Thyroid gland (tissue), 4 donors: ENCODE measurements at regions of chr10 and their contacts with region 1.

Region 1: GRCh38 chr10:63720072-63720537 is 198.9 kb downstream of the REEP3 start:
- DNase-seq: peak; percentile 47 to 54
- H3K4me3 ChIP-seq: no peak overlapping the region
- H3K27ac ChIP-seq: peak overlapping the region in 1 of 3 donors; percentile 21
- H3K4me1 ChIP-seq: peaks cover 8 to 22% of the 10 kb centered on the region in 2 donors
- H3K27me3 ChIP-seq: no peaks in the 10 kb centered on the region
- CTCF ChIP-seq: peak; percentile 92 to 99 (median 94)
- POLR2A ChIP-seq: no peak

Region 2: DNA sequence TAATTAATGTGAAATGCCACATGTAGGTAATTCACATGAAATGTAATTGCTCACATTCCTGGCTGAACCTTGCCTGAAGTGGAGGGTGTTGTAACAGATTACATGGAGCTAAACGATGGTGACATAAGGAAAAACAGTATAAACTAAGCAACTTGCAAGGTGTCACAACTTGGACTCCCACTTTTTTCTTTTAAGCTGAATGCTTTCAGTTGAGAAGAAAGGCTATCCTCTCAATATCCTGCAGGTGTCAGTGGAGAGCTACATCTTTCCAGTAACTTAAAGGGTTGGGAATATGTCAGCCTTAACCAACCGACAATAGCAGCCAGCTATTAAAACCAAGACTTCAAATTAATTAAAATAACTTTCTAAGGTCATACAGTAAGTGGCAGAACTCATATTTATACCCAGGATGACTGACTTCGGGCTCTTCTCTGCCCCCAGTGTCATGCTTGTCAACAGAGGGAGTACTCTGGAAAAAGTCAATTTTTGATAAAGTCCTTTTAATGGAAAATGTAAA is 553.3 kb before region 1 on chr10:
- intact Hi-C with region 1: loop called (anchors 5 kb)
- DNase-seq: no peak
- H3K4me3 ChIP-seq: no peak overlapping the region
- H3K27ac ChIP-seq: peak overlapping the region in 1 of 3 donors; percentile 41
- H3K4me1 ChIP-seq: peaks cover 8 to 13% of the 10 kb centered on the region in 2 donors
- H3K27me3 ChIP-seq: no peaks in the 10 kb centered on the region
- CTCF ChIP-seq: peak; percentile 66 to 94 (median 82)
- POLR2A ChIP-seq: no peak

Region 3: DNA sequence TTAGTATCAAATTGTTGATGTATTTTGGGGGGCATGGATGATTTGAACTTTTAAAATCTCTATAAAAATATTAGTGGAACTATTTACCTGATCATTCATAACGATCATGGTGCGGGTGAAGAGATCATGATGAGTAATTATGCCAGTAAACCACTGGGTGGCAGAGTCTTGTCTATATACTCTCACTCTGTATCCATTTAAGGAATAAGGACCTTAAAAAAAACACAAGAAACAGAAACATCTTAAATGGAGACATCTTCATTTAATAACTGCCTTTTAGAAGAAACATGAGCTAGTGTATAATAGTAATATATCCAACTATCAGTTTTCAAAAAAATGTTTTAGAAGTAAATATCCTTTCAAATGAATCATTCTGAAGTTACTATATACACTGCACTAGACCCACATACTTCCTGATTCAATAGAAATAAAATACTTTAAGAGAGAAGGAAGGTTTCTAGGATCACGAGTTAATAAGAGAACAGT is 502.9 kb before region 1 on chr10:
- intact Hi-C with region 1: loop called (anchors 10 kb)
- DNase-seq: no peak
- H3K4me3 ChIP-seq: no peak overlapping the region
- H3K27ac ChIP-seq: peak overlapping the region in 1 of 3 donors; percentile 34
- H3K4me1 ChIP-seq: peaks cover 14 to 19% of the 10 kb centered on the region in 2 donors
- H3K27me3 ChIP-seq: no peaks in the 10 kb centered on the region
- CTCF ChIP-seq: peak; percentile 25 to 87 (median 66)
- POLR2A ChIP-seq: no peak

Region 4: DNA sequence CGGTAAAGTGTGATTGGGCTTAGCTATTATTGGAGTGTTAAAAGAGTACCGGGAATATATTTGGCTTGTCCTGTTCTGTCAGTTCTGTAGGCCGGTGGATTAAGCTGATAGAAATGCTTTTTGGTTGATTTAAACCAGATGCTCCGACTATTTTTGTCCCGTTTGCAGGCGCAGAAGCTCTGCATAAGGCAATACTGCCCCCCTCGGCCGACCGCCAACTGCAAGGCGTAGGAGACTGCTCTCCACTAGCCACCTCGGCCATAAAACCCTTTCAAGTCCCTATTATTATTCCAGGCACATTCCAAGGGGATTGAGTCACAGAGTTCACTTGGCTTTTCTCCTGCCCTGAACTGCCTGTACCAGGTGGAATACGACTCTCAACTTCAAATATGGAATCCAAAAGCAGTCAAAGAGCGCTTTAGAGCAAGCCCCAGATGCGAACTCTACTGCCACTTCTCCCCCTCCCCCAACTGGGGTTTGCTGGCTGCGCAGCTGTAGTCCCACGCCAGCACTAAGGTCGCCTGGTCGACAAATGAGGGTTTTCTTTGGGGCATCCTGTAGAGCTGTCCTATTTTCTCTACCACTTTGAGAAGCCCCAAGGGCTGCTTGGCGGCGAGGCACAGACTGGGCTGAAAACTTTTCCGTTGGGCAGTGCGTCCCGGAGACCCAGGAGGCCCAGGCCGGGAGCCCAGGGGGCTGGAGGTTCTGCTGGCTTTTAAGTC is 90.6 kb before region 1 on chr10:
- intact Hi-C with region 1: loop called (anchors 5 kb)
- DNase-seq: peak; percentile 98 to 99
- H3K4me3 ChIP-seq: peak overlapping the region in 2 of 3 donors; percentile 49 to 70
- H3K27ac ChIP-seq: peak overlapping the region; percentile 99
- H3K4me1 ChIP-seq: peaks cover 14 to 19% of the 10 kb centered on the region in 2 donors
- H3K27me3 ChIP-seq: no peaks in the 10 kb centered on the region
- CTCF ChIP-seq: peak; percentile 25 to 82 (median 78)
- POLR2A ChIP-seq: peak in 1 of 2 donors; percentile 17

Region 5: DNA sequence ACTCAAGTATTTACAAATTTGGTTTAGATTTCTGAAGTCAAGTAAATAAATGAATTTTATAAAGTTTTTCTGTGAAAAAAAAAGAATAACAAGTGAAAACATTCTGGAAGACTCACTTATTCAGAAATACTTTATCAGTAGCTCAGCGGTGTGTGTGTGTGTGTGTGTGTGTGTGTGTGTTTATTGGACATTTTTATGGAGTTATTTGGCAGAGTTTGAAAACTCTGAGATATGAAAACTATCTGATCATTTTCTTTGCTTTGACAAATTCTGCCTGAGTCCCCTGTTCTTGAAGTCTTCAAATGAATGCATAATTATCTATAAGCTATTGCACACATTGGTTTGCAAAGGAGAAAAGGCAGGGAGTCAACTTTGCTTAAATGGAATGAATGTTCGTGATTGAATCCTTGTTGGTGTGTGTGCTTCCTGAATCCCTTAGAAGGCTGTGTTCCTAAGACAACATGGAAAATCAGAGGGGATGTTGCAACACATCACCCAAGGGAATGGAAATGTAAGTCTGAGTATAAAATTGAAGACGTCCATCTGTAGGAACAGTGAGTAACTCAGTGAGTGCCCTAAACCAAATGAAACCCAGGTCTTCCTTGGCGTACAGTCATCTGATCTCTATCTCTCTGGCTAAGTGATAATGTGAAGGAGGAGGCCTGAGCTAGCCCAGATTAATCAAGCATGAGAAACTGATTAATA is 38.0 kb before region 1 on chr10:
- intact Hi-C with region 1: no loop called
- DNase-seq: no peak
- H3K4me3 ChIP-seq: no peak overlapping the region
- H3K27ac ChIP-seq: peak overlapping the region in 1 of 3 donors; percentile 54
- H3K4me1 ChIP-seq: no peaks in the 10 kb centered on the region
- H3K27me3 ChIP-seq: no peaks in the 10 kb centered on the region
- CTCF ChIP-seq: no peak
- POLR2A ChIP-seq: no peak